ENCODE measurements at regions of chr6 and their contacts with region 1.

Region 1: GRCh38 chr6:147194652-147195411 is 9.4 kb upstream of the STXBP5 start:
- DNase-seq: no peak
- H3K4me3 Mint-ChIP-seq: no peak overlapping the region
- H3K27ac Mint-ChIP-seq: peak overlapping the region; percentile 77
- H3K4me1 Mint-ChIP-seq: peaks cover 20% of the 10 kb centered on the region
- H3K27me3 Mint-ChIP-seq: no peaks in the 10 kb centered on the region

Region 2: DNA sequence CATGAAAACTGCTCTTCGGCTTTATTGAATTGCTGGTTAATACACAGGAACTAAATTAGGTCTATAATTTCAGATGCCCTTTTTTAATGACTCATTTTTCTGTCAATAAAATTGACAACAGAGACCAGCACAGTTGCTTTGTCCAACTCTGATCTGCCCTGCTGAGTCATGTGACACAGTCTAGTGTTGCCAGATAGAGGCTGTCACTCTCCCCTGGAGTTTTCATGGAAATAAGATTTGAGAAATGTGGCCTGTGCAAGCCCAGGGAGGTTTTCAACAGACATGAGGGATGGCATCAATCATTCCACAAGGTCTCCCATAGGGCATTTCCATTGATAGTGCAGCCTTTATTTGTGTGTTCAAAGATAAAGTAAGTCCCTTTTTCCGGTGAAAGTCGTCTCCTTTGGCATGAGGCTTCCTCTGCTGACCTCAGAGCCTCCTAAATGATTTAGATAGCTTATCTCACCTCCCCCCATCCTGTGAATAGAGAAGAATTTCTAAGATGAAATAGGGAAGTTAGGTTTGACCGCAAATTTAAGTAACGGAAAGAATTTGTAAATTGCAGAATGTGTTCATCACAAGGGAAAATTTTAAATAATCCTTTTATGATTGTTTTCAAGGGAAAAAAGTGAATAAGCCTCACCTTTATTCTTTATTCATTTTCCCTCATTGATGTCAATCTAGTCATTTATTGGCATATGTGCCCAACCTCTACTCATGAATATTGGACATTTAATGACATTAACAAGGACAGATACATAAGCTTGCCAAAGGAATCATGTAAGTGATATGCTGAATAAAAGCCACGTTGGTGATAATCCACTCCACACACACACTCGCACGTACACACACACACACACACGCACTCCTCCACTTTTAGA is 318.3 kb before region 1 on chr6:
- intact Hi-C with region 1: loop called (anchors 1 kb)
- DNase-seq: no peak
- H3K4me3 Mint-ChIP-seq: peak overlapping the region; percentile 24
- H3K27ac Mint-ChIP-seq: peak overlapping the region; percentile 83
- H3K4me1 Mint-ChIP-seq: peaks cover 16% of the 10 kb centered on the region
- H3K27me3 Mint-ChIP-seq: no peaks in the 10 kb centered on the region

Region 3: GRCh38 chr6:147212622-147213021 is 17.8 kb after region 1 on chr6:
- intact Hi-C with region 1: no loop called
- DNase-seq: no peak
- H3K4me3 Mint-ChIP-seq: no peak overlapping the region
- H3K27ac Mint-ChIP-seq: no peak overlapping the region
- H3K4me1 Mint-ChIP-seq: peaks cover 9% of the 10 kb centered on the region
- H3K27me3 Mint-ChIP-seq: no peaks in the 10 kb centered on the region

Region 4: DNA sequence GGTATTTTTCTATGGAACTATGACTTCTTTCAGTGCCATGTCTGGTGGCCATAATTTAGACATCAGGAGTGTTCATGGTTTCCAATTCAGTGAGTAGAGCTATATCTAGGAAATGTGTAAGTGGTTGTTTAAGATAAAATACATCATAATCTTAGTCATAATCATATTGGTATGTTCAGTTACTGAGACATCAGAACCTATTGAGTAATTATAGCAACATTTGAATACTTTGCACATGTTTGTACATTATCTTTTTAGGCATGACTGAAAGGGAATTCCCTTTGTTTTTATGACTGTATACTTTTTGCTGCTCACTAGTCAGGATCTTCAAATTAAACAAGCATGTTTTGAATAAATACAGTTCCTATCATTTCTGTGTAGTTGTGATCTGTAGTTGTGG is 73.4 kb after region 1 on chr6:
- intact Hi-C with region 1: loop called (anchors 1 kb)
- DNase-seq: no peak
- H3K4me3 Mint-ChIP-seq: no peak overlapping the region
- H3K27ac Mint-ChIP-seq: peak overlapping the region; percentile 70
- H3K4me1 Mint-ChIP-seq: peaks cover 9% of the 10 kb centered on the region
- H3K27me3 Mint-ChIP-seq: no peaks in the 10 kb centered on the region